HepG2 (cell line): ENCODE measurements at regions of chr20 and their contacts with region 1.

Region 1: GRCh38 chr20:46689082-46689754 is at the start of gene TP53RK:
- DNase-seq: peak; percentile 81
- ATAC-seq: peak; percentile 93
- H3K4me3 ChIP-seq: peak within 1 kb of the TSS; percentile 69 to 90 (median 87)
- H3K27ac ChIP-seq: peak within 1 kb of the TSS; percentile 72
- H3K4me1 ChIP-seq: peaks cover 65% of the 10 kb centered on the region
- H3K27me3 ChIP-seq: peaks cover 0 to 5% of the 10 kb centered on the region in 2 experiments; a peak in 1 of 5 replicates
- CTCF ChIP-seq: peak; percentile 5; the same call in 1 of the 2 replicates
- EP300 ChIP-seq: no peak
- POLR2A ChIP-seq: peak; percentile 82 to 89
- RAD21 ChIP-seq: peak; percentile 62
- total RNA-seq, gene TP53RK: 25.5 and 31.0 TPM in 2 replicates

Region 2: GRCh38 chr20:46406199-46406985 is 282.8 kb before region 1 on chr20 and contains the start of gene ELMO2:
- CTCF ChIA-PET with region 1: no interaction called
- POLR2A ChIA-PET with region 1: no interaction called
- in situ Hi-C with region 1: no loop called
- intact Hi-C with region 1: loop called (anchors 1 kb)
- DNase-seq: peak; percentile 99
- ATAC-seq: peak; percentile 91
- H3K4me3 ChIP-seq: peak within 1 kb of the TSS; percentile 90 to 98 (median 93)
- H3K27ac ChIP-seq: peak within 1 kb of the TSS; percentile 79
- H3K4me1 ChIP-seq: peaks cover 79% of the 10 kb centered on the region
- H3K27me3 ChIP-seq: no peaks in the 10 kb centered on the region; a peak in 1 of 5 replicates
- CTCF ChIP-seq: peak; percentile 22
- EP300 ChIP-seq: peak in 1 of 2 experiments; percentile 17; a peak in 1 of 4 replicates
- POLR2A ChIP-seq: peak; percentile 53 to 64
- RAD21 ChIP-seq: no peak
- total RNA-seq, gene ELMO2: 35.7 and 42.8 TPM in 2 replicates

Region 3: DNA sequence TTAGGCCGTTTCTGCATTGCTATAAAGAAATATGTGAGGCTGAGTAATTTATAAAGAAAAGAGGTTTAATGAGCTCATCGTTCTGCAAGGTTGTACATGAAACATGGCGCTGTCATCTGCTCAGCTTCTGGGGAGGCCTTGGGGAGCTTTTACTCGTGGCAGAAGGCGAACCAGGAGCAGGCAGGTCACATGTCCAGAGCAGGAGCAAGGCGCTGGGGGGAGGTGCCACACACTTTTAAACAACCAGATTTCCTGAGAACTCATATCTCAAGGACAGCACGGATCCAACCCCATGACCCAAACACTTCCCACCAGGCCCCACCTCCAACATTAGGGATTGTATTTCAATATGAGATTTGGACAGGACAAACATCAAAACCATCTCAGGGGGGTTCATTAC is 31.6 kb before region 1 on chr20:
- CTCF ChIA-PET with region 1: no interaction called
- POLR2A ChIA-PET with region 1: no interaction called
- in situ Hi-C with region 1: no loop called
- intact Hi-C with region 1: no loop called
- DNase-seq: no peak
- ATAC-seq: no peak
- H3K4me3 ChIP-seq: no peak overlapping the region
- H3K27ac ChIP-seq: no peak overlapping the region
- H3K4me1 ChIP-seq: peaks cover 34% of the 10 kb centered on the region
- H3K27me3 ChIP-seq: no peaks in the 10 kb centered on the region
- CTCF ChIP-seq: no peak
- EP300 ChIP-seq: no peak
- POLR2A ChIP-seq: no peak
- RAD21 ChIP-seq: no peak

Region 4: DNA sequence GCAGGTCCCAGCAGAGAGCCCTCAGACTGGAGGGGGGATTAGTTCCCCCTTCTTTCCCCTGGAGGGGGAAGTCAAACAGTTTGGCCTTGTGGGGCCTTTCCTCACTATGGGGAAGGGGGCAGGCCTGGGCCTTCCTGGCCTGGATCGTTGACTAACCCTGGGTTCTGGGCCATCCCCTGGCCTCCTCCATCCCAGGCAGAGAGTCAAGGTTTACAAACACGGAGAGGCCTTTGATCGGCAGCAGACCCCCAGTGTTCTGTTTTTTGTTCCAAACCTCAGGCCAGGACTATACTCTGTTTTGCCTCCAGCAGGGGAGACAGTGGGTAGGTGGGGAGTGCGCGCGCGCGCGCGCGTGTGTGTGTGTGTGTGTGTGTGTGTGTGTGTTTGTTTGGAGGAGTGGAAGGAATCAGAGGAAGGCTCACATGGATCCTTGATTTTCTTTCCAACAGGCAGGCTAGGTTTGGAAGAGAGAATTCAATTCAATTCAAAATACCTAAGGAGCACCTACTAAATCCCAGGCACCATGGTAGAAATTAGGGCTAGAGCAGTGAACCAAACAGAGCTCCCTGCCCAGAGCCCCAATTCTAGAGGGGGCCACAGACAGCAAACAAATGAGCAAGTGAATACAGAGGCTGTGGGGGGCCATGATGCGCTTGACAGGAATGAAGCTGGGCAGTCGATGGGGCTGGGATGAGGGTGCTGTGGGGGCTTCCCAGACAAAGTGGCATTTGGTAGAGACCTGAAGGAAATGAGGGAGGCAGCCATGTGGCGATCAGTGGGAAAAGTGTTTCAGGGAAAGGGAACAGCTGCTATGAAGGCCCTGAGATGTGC is 14.8 kb before region 1 on chr20:
- CTCF ChIA-PET with region 1: no interaction called
- POLR2A ChIA-PET with region 1: interaction called, 10 read pairs
- in situ Hi-C with region 1: no loop called
- intact Hi-C with region 1: no loop called
- DNase-seq: peak; percentile 100
- ATAC-seq: peak; percentile 89
- H3K4me3 ChIP-seq: peak overlapping the region in 1 of 3 experiments; percentile 53; a peak in 2 of 6 replicates
- H3K27ac ChIP-seq: peak overlapping the region; percentile 84
- H3K4me1 ChIP-seq: peaks cover 96% of the 10 kb centered on the region
- H3K27me3 ChIP-seq: no peaks in the 10 kb centered on the region
- CTCF ChIP-seq: peak; percentile 53
- EP300 ChIP-seq: peak; percentile 55 to 95; a peak in 3 of 4 replicates
- POLR2A ChIP-seq: no peak
- RAD21 ChIP-seq: peak; percentile 77

Region 5: GRCh38 chr20:46708172-46708860 is 19.1 kb after region 1 on chr20:
- CTCF ChIA-PET with region 1: no interaction called
- POLR2A ChIA-PET with region 1: interaction called, 5 read pairs
- in situ Hi-C with region 1: no loop called
- intact Hi-C with region 1: loop called (anchors 1 kb)
- DNase-seq: peak; percentile 82
- ATAC-seq: peak; percentile 55
- H3K4me3 ChIP-seq: peak overlapping the region; percentile 69 to 92 (median 70)
- H3K27ac ChIP-seq: peak overlapping the region; percentile 71
- H3K4me1 ChIP-seq: peaks cover 70% of the 10 kb centered on the region
- H3K27me3 ChIP-seq: no peaks in the 10 kb centered on the region; a peak in 2 of 5 replicates
- CTCF ChIP-seq: peak; percentile 97
- EP300 ChIP-seq: no peak
- POLR2A ChIP-seq: peak in 1 of 2 experiments; percentile 89
- RAD21 ChIP-seq: no peak

Region 6: DNA sequence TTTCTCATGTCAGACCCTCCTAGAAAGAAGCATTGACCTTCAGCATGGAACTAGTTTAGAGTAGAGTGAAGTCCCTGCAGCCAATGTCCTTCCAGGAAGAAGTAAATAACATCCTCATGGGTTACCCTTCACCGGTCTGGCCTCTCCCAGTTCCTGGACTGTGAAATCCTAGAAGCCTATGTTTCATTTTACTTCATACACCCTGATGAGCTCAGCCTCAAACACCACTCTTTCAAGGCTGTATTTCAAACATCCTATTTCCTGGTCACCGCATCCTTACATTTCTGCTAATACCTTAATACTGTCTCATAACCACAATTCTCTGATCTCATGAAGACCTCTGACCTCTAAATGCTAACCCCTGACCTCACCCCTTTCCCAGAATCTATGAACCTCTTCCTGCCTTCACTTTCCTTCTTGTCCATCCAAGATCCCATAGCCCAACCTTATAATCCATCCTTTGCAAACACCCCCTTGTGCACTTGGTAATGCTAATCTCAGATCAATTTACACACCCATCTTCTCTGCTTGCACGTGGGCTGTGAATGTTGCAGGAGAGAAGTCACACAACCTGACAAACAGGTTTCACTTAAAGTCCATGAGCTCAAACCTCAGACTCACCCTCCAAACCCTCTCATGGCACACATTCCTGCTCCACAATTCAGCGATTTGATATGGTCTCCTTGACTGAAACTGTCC is 50.4 kb after region 1 on chr20:
- CTCF ChIA-PET with region 1: no interaction called
- POLR2A ChIA-PET with region 1: no interaction called
- in situ Hi-C with region 1: no loop called
- intact Hi-C with region 1: no loop called
- DNase-seq: no peak
- ATAC-seq: no peak
- H3K4me3 ChIP-seq: no peak overlapping the region
- H3K27ac ChIP-seq: no peak overlapping the region
- H3K4me1 ChIP-seq: no peaks in the 10 kb centered on the region
- H3K27me3 ChIP-seq: peaks cover 7 to 40% of the 10 kb centered on the region in 2 experiments; a peak in 4 of 5 replicates
- CTCF ChIP-seq: no peak
- EP300 ChIP-seq: no peak
- POLR2A ChIP-seq: no peak
- RAD21 ChIP-seq: no peak

Region 7: DNA sequence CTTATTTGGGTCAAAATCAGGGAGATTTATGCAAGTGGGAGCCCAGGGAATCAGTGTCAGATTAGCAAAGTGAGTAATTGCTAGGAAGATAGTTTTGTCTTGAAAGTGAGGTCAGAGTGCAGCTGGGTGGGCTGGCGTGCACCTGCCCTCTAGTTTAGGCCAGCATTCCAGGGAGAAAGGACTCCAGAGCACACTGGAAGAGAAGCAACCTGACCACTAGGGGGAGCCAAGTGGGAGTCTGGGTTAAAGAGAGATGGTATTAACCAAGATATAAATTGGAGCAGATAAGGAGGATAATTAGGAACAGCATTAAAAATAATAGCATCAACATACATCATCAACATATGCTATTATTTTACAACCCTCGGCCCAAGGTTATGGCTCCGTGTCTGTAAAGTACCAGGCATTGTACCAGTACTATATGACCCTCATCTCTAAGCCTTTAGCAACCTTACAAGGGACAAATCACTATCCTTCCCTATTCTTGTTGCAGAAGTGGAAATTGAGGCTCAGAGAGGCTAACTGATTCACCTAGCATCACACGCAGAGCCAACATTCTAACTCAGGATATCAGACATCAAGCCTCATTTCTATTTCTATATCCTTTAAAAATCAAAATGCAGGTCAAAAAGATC is 78.0 kb after region 1 on chr20:
- CTCF ChIA-PET with region 1: no interaction called
- POLR2A ChIA-PET with region 1: no interaction called
- in situ Hi-C with region 1: no loop called
- intact Hi-C with region 1: no loop called
- DNase-seq: peak; percentile 63
- ATAC-seq: peak; percentile 85
- H3K4me3 ChIP-seq: no peak overlapping the region
- H3K27ac ChIP-seq: no peak overlapping the region
- H3K4me1 ChIP-seq: no peaks in the 10 kb centered on the region
- H3K27me3 ChIP-seq: peaks cover 6 to 38% of the 10 kb centered on the region in 2 experiments
- CTCF ChIP-seq: peak; percentile 77
- EP300 ChIP-seq: no peak
- POLR2A ChIP-seq: no peak
- RAD21 ChIP-seq: peak; percentile 41; the same call in 1 of the 2 replicates